Panc1 (cell line): ENCODE measurements at regions of chr18 and their contacts with region 1.

Region 1: DNA sequence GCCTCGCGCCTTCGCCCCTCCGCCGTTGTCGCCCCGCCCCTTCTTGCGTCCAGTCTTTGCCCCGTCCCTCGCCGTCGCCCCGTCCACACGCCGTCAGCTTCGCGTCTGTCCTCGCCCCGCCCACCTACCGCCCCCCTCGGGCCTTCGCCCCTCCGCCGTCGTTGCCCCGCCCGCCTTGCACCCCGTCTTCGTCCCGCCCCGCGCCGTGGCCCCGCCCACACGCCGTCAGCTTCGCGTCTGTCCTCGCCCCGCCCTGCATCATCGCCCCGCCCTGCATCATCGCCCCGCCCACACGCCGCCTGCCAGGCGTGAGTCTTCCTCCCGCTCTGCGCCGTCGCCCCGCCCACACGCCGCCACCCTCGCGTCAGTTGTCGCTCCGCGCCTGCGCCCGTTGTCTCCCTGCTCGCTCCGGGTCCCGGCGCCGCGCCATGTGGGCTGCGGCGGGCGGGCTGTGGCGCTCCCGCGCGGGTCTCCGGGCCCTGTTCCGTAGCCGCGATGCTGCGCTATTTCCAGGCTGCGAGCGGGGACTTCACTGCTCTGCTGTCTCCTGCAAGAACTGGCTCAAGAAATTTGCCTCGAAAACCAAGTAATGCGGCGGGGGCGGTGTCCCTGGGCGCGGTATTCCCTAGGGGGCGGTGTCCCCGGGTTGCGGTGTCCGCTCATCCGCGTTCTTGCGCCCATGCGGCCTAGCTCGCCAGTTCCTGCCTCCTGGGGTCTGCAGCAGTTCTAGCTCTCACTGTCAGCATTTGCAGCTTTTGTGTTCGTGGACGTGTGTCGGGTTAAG is at the start of gene RBFA:
- DNase-seq: peak; percentile 91
- ATAC-seq: peak; percentile 90
- H3K4me3 ChIP-seq: peak within 1 kb of the TSS; percentile 73 to 85
- H3K27ac ChIP-seq: peak within 1 kb of the TSS; percentile 91
- H3K4me1 ChIP-seq: peaks cover 10% of the 10 kb centered on the region
- H3K27me3 ChIP-seq: no peaks in the 10 kb centered on the region
- CTCF ChIP-seq: no peak
- total RNA-seq, gene RBFA: 83.1 TPM

Region 2: GRCh38 chr18:79395761-79396387 is 638.4 kb before region 1 on chr18 and contains the start of gene NFATC1:
- CTCF ChIA-PET with region 1: no interaction called
- POLR2A ChIA-PET with region 1: interaction called, 10 read pairs
- in situ Hi-C with region 1: no loop called
- intact Hi-C with region 1: no loop called
- DNase-seq: no peak
- ATAC-seq: peak; percentile 55
- H3K4me3 ChIP-seq: peak within 1 kb of the TSS; percentile 59 to 70
- H3K27ac ChIP-seq: peak within 1 kb of the TSS; percentile 69
- H3K4me1 ChIP-seq: peaks cover 25% of the 10 kb centered on the region
- H3K27me3 ChIP-seq: no peaks in the 10 kb centered on the region
- CTCF ChIP-seq: no peak
- total RNA-seq, gene NFATC1: 30.8 TPM

Region 3: DNA sequence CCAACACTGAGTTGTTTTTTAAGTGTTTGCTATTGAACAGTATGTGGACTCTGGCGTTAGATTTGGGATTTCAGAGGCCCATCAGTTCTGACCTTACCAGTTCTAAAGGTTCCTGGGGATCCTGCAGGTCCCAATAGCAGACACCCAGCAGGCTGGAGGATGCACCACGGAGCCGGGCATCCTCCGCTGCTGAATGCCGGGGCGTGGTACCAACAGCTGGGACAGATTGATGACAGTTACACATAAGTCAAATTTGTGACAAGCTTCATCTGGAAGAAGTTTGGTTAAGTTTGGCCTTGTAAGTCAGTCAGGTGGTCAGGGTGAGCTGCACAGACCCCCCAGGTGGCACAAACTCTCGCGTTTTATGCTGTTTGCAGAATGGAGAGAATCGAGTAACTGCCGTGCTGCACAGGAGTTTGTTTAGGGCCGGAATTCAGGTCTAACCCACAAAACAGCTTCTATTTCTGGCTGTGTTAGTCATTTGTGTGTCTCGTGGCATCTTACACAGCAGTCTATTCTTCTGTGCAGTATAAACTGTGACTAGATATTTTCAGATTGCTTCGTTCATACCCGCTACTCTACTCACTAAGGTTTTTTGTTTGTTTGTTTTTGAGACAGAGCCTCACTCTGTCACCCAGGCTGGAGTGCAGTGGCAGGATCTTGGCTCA is 335.5 kb before region 1 on chr18:
- CTCF ChIA-PET with region 1: no interaction called
- POLR2A ChIA-PET with region 1: no interaction called
- in situ Hi-C with region 1: no loop called
- intact Hi-C with region 1: no loop called
- DNase-seq: no peak
- ATAC-seq: no peak
- H3K4me3 ChIP-seq: no peak overlapping the region
- H3K27ac ChIP-seq: no peak overlapping the region
- H3K4me1 ChIP-seq: no peaks in the 10 kb centered on the region
- H3K27me3 ChIP-seq: no peaks in the 10 kb centered on the region
- CTCF ChIP-seq: no peak

Region 4: GRCh38 chr18:79898916-79899608 is 135.2 kb before region 1 on chr18:
- CTCF ChIA-PET with region 1: no interaction called
- POLR2A ChIA-PET with region 1: no interaction called
- in situ Hi-C with region 1: no loop called
- intact Hi-C with region 1: no loop called
- DNase-seq: no peak
- ATAC-seq: no peak
- H3K4me3 ChIP-seq: no peak overlapping the region
- H3K27ac ChIP-seq: no peak overlapping the region
- H3K4me1 ChIP-seq: no peaks in the 10 kb centered on the region
- H3K27me3 ChIP-seq: no peaks in the 10 kb centered on the region
- CTCF ChIP-seq: no peak

Region 5: DNA sequence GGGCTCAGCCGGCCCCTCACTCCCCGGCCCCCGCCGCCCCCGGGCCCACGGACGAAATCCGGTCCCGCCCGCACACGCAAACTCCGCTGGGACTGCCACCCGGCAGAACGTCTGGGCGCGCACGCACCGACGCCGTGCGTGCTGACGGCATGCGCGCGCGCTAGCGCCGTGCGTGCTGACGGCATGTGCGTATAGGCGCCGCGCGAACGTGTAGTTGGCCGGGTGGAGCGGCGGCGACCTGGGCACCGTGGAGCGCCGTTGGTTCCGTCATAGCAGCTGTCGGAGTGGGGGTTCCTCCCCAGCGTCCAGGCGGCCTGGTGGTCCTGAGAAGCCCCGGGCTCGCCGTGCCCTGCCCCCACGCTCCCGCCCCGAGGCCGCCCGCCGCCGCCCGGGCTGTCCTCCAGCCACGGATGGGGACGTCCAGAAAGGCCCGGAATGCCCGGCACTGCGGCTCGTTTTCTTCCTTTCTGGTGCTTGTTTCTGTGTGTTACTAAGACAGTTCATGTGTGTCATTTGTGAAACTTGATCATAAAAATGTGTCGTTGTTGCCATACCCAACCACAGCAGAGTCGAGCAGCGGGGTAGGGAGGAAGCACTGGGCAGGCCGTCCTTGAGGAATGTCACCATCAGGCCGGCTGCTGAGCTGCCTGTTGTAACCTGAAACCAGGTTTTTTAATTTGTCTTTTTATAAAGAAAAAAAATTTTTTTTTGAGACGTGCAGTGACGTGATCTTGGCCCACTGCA is 45.6 kb before region 1 on chr18 and contains the start of gene TXNL4A:
- CTCF ChIA-PET with region 1: interaction called, 4 read pairs
- POLR2A ChIA-PET with region 1: interaction called, 11 read pairs
- in situ Hi-C with region 1: no loop called
- intact Hi-C with region 1: loop called (anchors 5 kb)
- DNase-seq: peak; percentile 52
- ATAC-seq: peak; percentile 99
- H3K4me3 ChIP-seq: peak within 1 kb of the TSS; percentile 68 to 87
- H3K27ac ChIP-seq: peak within 1 kb of the TSS; percentile 96
- H3K4me1 ChIP-seq: peaks cover 13% of the 10 kb centered on the region
- H3K27me3 ChIP-seq: no peaks in the 10 kb centered on the region
- CTCF ChIP-seq: no peak
- total RNA-seq, gene TXNL4A: 416 TPM

Region 6: DNA sequence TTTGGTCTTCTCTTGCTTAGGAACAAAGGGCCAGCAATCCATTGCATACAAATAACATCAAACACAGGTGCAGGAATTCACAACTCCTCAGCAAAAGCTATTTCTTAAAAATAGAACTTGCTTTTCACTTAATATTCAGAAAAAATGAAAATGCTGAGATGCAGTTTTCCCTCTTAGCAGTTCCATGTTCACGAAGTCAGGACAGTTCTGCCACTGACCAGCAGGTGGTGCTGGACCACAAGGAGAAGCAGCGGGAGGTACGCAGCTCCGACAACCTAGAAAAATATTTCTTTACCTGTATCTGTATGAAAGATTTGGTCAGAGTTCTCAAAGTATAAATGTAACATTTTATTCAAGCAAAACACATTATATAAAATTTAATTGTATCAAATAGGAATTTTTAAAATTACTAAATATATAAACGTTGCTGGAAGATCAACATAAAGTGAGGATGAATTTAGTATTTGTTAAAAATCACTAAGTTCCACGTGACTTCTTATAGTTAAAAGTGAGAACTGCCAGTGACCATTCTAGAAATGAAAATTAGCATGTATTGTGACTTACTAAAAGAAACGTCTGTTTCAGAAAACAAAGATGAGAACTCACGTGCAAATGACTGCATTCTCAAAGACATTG is 123.6 kb after region 1 on chr18:
- CTCF ChIA-PET with region 1: no interaction called
- POLR2A ChIA-PET with region 1: no interaction called
- in situ Hi-C with region 1: no loop called
- intact Hi-C with region 1: loop called (anchors 10 kb)
- DNase-seq: peak; percentile 72
- ATAC-seq: peak; percentile 81
- H3K4me3 ChIP-seq: no peak overlapping the region
- H3K27ac ChIP-seq: no peak overlapping the region
- H3K4me1 ChIP-seq: no peaks in the 10 kb centered on the region; the same call in 1 of the 2 replicates
- H3K27me3 ChIP-seq: no peaks in the 10 kb centered on the region
- CTCF ChIP-seq: no peak

Region 7: DNA sequence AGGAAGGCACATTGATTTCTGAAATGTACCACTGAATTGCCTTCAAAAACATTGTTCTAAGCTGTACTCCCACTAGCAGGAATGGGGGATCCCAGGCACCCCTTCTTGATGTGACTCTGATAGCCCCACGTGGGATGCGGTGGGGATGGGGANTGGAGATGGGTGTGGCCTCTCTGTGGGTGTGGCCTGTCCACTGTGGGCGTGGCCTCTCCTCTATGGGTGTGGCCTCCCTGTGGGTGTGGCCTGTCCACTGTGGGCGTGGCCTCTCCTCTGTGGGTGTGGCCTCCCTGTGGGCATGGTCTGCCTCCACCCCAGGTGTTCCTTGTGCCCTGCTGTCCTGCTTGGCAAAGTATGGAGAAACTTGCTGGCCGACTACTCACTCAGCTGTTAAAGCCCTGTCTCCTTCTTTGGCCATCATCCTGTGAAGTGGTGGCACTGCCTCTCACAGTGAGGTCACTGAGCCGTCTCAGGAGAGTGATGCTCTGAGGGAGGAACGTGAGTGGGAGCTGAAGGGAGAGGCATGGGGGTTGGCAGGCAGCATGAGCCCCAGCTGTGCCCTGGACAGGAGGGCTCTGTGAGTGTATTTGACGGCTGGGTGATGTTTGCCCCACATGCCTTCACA is 219.7 kb after region 1 on chr18:
- CTCF ChIA-PET with region 1: interaction called, 12 read pairs
- POLR2A ChIA-PET with region 1: no interaction called
- in situ Hi-C with region 1: no loop called
- intact Hi-C with region 1: no loop called
- DNase-seq: no peak
- ATAC-seq: peak; percentile 76
- H3K4me3 ChIP-seq: no peak overlapping the region
- H3K27ac ChIP-seq: no peak overlapping the region
- H3K4me1 ChIP-seq: no peaks in the 10 kb centered on the region
- H3K27me3 ChIP-seq: no peaks in the 10 kb centered on the region
- CTCF ChIP-seq: no peak